CD8-positive, alpha-beta memory T cell (primary cell): ENCODE measurements at regions of chr16 and their contacts with region 1.

Region 1: DNA sequence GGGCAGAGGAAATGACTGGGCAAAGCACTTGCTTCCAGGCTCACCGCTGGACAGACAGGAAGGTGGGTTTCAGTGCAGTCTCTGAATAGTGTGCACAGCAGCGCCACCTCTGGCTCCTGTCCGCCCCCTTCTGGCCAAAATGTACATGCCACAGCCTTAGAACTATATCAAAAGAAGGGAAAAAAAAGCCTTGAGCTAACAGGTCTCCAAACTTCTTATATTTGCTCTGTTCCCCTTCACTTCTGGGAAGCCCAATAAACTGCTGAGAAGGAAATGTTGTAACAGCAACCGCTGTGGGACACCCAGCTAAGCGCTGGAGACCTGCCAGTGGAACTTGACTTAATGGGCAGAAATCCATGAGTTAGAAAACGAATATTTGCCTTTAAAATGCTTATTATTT is 17.5 kb downstream of the COG7 start:
- DNase-seq: peak; percentile 40 to 67 (median 45)
- H3K4me3 ChIP-seq: no peak overlapping the region
- H3K4me3 Mint-ChIP-seq: no peak overlapping the region
- H3K27ac ChIP-seq: no peak overlapping the region
- H3K27ac Mint-ChIP-seq: peak overlapping the region in 2 of 8 donors; percentile 6 to 78
- H3K4me1 ChIP-seq: no peaks in the 10 kb centered on the region
- H3K4me1 Mint-ChIP-seq: peaks cover 3 to 10% (median 10%) of the 10 kb centered on the region in 3 donors
- H3K27me3 ChIP-seq: no peaks in the 10 kb centered on the region
- H3K27me3 Mint-ChIP-seq: no peaks in the 10 kb centered on the region

Region 2: GRCh38 chr16:23416816-23417215 is 18.7 kb before region 1 on chr16:
- CTCF ChIA-PET with region 1: interaction called, 17 read pairs
- POLR2A ChIA-PET with region 1: no interaction called
- DNase-seq: no peak
- H3K4me3 ChIP-seq: no peak overlapping the region
- H3K4me3 Mint-ChIP-seq: no peak overlapping the region
- H3K27ac ChIP-seq: no peak overlapping the region
- H3K27ac Mint-ChIP-seq: no peak overlapping the region
- H3K4me1 ChIP-seq: no peaks in the 10 kb centered on the region
- H3K4me1 Mint-ChIP-seq: no peaks in the 10 kb centered on the region
- H3K27me3 ChIP-seq: no peaks in the 10 kb centered on the region
- H3K27me3 Mint-ChIP-seq: no peaks in the 10 kb centered on the region

Region 3: GRCh38 chr16:23452572-23453337 is 17.3 kb after region 1 on chr16 and contains the start of gene COG7:
- CTCF ChIA-PET with region 1: interaction called, 15 read pairs
- POLR2A ChIA-PET with region 1: no interaction called
- DNase-seq: peak; percentile 71 to 89 (median 82)
- H3K4me3 ChIP-seq: peak within 1 kb of the TSS; percentile 98
- H3K4me3 Mint-ChIP-seq: peak within 1 kb of the TSS; percentile 94 to 99 (median 96)
- H3K27ac ChIP-seq: peak within 1 kb of the TSS; percentile 86
- H3K27ac Mint-ChIP-seq: peak within 1 kb of the TSS; percentile 85 to 96 (median 92)
- H3K4me1 ChIP-seq: peaks cover 21% of the 10 kb centered on the region
- H3K4me1 Mint-ChIP-seq: peaks cover 38 to 48% (median 40%) of the 10 kb centered on the region in 3 donors
- H3K27me3 ChIP-seq: no peaks in the 10 kb centered on the region
- H3K27me3 Mint-ChIP-seq: peaks cover 0 to 6% of the 10 kb centered on the region in 2 donors
- total RNA-seq, gene COG7: 15.8 to 17.9 TPM

Region 4: DNA sequence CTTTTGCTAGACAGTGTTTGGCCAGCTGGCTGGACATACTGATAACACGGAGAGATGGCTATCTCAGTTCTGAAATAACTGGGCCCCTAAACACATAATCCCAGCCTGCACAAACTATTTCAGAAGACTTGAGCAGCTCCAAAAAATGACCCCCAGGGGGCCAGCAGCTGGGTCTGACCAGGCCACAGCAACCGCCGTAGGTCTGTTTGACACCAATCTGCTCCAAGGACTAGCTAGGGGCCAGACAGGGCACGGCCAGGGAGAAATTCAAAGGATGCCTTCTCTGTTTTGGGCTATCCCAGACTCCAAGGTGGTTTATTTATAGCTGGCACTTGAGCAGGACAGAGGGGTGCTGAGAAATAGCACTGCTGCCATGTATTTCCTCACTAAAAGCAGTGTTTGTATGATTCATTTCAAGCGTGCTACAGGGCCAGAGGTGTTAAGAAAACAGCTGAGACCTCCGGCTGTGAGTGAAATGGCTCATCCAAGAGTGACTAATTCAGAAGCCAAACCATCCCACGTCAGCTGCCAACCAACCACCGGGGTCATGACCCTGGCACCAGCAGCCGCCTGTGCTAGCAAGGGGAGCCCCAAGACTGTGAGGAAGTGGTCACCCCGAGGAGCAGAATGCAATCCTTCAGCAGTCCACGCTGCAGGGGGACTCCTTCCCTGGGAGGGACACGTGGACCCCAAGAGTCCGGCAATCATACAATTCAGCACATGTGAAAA is 69.1 kb after region 1 on chr16:
- CTCF ChIA-PET with region 1: interaction called, 11 read pairs
- POLR2A ChIA-PET with region 1: no interaction called
- DNase-seq: peak; percentile 14 to 90 (median 70)
- H3K4me3 ChIP-seq: peak overlapping the region; percentile 27
- H3K4me3 Mint-ChIP-seq: peak overlapping the region; percentile 41 to 88 (median 77)
- H3K27ac ChIP-seq: peak overlapping the region; percentile 64
- H3K27ac Mint-ChIP-seq: peak overlapping the region; percentile 86 to 97 (median 95)
- H3K4me1 ChIP-seq: peaks cover 56% of the 10 kb centered on the region
- H3K4me1 Mint-ChIP-seq: peaks cover 74 to 97% (median 85%) of the 10 kb centered on the region in 3 donors
- H3K27me3 ChIP-seq: no peaks in the 10 kb centered on the region
- H3K27me3 Mint-ChIP-seq: no peaks in the 10 kb centered on the region

Region 5: DNA sequence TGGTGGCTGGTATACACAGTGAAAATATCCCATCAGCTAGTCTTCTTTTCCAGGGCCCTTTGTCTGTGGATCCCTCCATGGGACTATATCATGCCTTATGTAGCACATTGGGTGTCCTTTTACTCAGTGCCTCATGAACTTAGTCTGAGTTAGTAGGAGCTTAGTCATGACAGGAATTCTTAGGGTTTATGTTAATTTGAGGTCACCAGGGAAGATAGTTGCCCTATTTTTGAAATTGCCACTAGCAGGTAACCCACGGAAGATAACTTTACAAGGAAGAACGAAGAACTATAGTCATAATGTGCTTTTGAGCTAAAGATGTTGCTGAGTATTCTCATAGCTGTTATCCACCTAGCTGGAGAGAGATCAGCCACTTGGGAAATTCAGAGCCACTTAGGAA is 228.4 kb after region 1 on chr16:
- CTCF ChIA-PET with region 1: no interaction called
- POLR2A ChIA-PET with region 1: no interaction called
- DNase-seq: no peak
- H3K4me3 ChIP-seq: no peak overlapping the region
- H3K4me3 Mint-ChIP-seq: no peak overlapping the region
- H3K27ac ChIP-seq: no peak overlapping the region
- H3K27ac Mint-ChIP-seq: peak overlapping the region in 1 of 8 donors; percentile 58
- H3K4me1 ChIP-seq: no peaks in the 10 kb centered on the region
- H3K4me1 Mint-ChIP-seq: peaks cover 0 to 1% (median 0%) of the 10 kb centered on the region in 3 donors
- H3K27me3 ChIP-seq: no peaks in the 10 kb centered on the region
- H3K27me3 Mint-ChIP-seq: no peaks in the 10 kb centered on the region